ENCODE measurements at regions of chr4 and their contacts with region 1.

Region 1: DNA sequence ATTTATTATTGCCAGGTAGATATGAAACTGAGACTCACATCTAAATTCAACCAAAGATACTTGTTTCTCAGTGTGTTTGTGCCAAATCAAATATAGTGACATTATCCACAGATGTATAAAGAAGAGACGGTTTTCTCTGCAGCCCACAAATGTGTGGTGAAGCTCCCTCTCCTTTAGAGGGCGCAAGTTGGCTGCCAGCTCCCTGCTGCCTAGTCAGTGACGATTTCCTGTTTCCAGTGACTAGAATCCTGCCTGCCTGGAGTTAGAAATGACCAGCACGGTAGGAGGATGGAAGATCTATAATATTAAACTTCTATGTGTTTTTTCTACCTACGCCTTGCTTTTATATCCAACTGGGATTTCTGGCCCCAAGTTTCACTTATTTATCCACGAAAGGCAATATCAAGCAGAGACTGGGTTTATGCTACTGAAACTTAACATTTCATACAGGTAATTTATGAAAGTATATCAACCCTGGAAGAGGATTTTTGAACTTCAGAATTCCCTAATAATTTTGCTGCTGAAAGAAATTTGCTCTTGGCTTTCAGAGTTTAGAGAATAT is 1793.7 kb upstream of the TENM3 start:
- DNase-seq: peak; percentile 27 to 61 (median 45)
- H3K4me3 ChIP-seq: no peak overlapping the region
- H3K27ac ChIP-seq: no peak overlapping the region
- H3K4me1 ChIP-seq: no peaks in the 10 kb centered on the region
- H3K27me3 ChIP-seq: no peaks in the 10 kb centered on the region

Region 2: GRCh38 chr4:180350901-180351300 is 98.6 kb before region 1 on chr4:
- CTCF ChIA-PET with region 1: no interaction called
- POLR2A ChIA-PET with region 1: no interaction called
- DNase-seq: no peak
- H3K4me3 ChIP-seq: no peak overlapping the region
- H3K27ac ChIP-seq: no peak overlapping the region
- H3K4me1 ChIP-seq: no peaks in the 10 kb centered on the region
- H3K27me3 ChIP-seq: no peaks in the 10 kb centered on the region

Region 3: DNA sequence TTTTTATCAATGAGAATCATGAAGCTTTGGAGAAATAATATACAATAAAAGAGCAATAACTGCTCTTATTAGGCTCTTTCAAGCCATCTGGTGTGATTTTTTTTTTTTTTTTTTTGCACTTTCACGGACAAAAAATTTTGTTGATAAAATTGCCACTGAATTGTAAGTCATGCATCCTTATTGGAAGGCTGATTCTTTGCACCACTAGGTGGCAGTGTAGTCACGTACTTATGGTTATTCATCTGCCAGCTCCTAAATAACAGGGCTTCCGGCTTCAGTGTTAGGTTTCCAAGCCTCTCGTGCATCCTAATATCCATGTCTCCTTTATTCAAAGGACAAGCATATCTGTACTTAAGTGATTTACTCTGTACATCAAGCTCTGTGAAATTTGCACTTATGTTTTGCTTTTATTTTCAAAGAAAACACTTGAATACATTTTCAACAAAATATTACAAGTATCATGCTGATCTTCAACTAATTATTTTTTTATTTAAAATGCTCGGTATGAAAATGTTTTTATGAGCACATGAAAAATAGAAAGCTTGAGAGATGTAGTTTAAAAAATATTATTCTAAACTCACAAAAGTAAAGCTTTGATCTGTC is 215.4 kb after region 1 on chr4:
- CTCF ChIA-PET with region 1: interaction called, 13 read pairs
- POLR2A ChIA-PET with region 1: no interaction called
- DNase-seq: peak; percentile 80 to 87 (median 84)
- H3K4me3 ChIP-seq: no peak overlapping the region
- H3K27ac ChIP-seq: no peak overlapping the region
- H3K4me1 ChIP-seq: no peaks in the 10 kb centered on the region
- H3K27me3 ChIP-seq: no peaks in the 10 kb centered on the region

Measured in common myeloid progenitor, CD34-positive (primary cell).